ENCODE measurements at regions of chr3 and their contacts with region 1.

Region 1: DNA sequence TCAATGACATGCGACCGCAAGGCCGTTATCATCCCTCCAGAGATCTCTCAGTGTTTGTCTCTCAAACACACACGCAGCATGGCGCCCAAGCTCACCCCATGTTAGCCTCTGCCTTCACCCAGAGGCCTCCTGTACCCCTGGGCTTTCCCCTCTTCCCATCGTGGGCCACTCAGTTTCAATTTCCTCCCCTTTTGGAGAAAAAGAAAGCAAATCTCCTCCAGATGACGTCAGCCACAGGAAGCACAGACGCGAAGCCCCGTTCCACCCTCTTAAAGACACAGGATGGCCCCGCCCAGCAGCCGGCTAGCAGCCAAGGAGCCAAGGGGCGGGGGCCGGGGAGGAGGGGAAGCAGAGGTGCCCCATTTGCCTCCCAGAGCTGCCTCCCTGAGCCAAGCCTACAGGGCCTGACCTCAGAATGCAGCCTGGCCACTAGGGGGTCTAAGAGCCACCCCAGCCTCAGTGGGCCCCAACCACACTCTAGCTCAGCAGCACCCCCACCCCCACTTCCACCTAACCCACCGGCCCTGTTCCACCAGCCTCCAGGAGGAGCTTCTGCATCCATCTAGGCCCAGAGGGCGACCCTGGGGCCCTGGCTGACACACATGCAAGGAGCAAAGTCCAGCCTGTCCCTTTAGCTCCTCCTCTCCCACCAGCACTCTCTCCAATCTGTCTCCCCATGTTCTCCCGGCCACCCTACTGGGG is 26.5 kb downstream of the ATRIP start:
- DNase-seq: peak; percentile 82
- H3K4me3 ChIP-seq: peak overlapping the region; percentile 61 to 65
- H3K27ac ChIP-seq: peak overlapping the region; percentile 80 to 87
- H3K4me1 ChIP-seq: peaks cover 0 to 28% of the 10 kb centered on the region in 2 experiments; a peak in 1 of 4 replicates
- H3K27me3 ChIP-seq: no peaks in the 10 kb centered on the region
- CTCF ChIP-seq: peak; percentile 59
- EP300 ChIP-seq: no peak
- RAD21 ChIP-seq: peak; percentile 11; the same call in 1 of the 2 replicates

Region 2: GRCh38 chr3:48356420-48356819 is 116.6 kb before region 1 on chr3:
- CTCF ChIA-PET with region 1: no interaction called
- POLR2A ChIA-PET with region 1: no interaction called
- DNase-seq: no peak
- H3K4me3 ChIP-seq: no peak overlapping the region
- H3K27ac ChIP-seq: no peak overlapping the region
- H3K4me1 ChIP-seq: peaks cover 0 to 15% of the 10 kb centered on the region in 2 experiments; a peak in 2 of 4 replicates
- H3K27me3 ChIP-seq: no peaks in the 10 kb centered on the region
- CTCF ChIP-seq: no peak
- EP300 ChIP-seq: no peak
- RAD21 ChIP-seq: no peak

Region 3: DNA sequence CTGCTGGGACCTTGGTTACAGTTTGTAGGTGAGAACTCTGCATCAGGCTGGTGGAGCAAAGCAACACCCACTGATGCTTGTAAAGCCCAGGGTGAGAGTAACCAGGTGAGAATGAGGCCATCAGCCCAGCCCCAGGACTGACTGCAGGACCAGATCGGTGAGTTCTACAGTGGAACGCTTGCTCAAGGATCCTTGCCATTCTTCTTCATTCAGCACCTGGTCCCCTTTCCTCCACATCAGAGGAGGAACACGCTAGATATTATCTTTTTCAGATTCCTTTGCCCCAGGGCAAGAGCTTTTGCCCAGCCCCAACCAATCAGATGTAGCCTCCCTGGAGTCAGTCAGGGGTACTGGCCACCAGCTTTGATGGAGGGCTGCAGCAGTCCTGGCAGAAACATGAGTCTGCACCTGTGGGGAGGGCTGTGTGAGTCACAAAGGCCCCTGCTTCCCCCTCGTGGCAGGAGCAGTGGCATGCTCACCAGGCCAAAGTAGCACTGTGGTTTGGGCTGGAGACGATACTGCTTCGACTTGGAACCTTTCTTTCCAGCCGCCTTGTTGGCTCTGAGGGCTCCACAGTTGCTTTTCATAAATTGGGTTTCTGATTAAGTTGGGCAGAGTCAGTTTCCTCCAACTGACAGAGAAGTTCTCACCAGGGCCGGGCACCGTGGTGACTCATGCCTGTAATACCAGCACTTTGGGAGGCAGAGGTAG is 34.4 kb after region 1 on chr3:
- CTCF ChIA-PET with region 1: interaction called, 16 read pairs
- POLR2A ChIA-PET with region 1: interaction called, 9 read pairs
- DNase-seq: peak; percentile 86
- H3K4me3 ChIP-seq: 0 out of 4 replicates have a peak overlapping the region, but pooled peaks of 1 of the 2 experiments have one; percentile 1
- H3K27ac ChIP-seq: peak overlapping the region; percentile 29 to 58
- H3K4me1 ChIP-seq: peaks cover 14 to 30% of the 10 kb centered on the region in 2 experiments; a peak in 2 of 4 replicates
- H3K27me3 ChIP-seq: no peaks in the 10 kb centered on the region
- CTCF ChIP-seq: peak; percentile 58
- EP300 ChIP-seq: peak in 1 of 2 experiments; percentile 25; a peak in 1 of 4 replicates
- RAD21 ChIP-seq: peak; percentile 89

Region 4: GRCh38 chr3:48747015-48747615 is 274.0 kb after region 1 on chr3:
- CTCF ChIA-PET with region 1: no interaction called
- POLR2A ChIA-PET with region 1: no interaction called
- DNase-seq: no peak
- H3K4me3 ChIP-seq: no peak overlapping the region
- H3K27ac ChIP-seq: no peak overlapping the region
- H3K4me1 ChIP-seq: no peaks in the 10 kb centered on the region
- H3K27me3 ChIP-seq: no peaks in the 10 kb centered on the region
- CTCF ChIP-seq: no peak
- EP300 ChIP-seq: no peak
- RAD21 ChIP-seq: no peak

Measured in SK-N-SH (cell line).